Posterior cingulate gyrus (tissue), 11 donors: ENCODE measurements at regions of chr5 and their contacts with region 1.

Region 1: DNA sequence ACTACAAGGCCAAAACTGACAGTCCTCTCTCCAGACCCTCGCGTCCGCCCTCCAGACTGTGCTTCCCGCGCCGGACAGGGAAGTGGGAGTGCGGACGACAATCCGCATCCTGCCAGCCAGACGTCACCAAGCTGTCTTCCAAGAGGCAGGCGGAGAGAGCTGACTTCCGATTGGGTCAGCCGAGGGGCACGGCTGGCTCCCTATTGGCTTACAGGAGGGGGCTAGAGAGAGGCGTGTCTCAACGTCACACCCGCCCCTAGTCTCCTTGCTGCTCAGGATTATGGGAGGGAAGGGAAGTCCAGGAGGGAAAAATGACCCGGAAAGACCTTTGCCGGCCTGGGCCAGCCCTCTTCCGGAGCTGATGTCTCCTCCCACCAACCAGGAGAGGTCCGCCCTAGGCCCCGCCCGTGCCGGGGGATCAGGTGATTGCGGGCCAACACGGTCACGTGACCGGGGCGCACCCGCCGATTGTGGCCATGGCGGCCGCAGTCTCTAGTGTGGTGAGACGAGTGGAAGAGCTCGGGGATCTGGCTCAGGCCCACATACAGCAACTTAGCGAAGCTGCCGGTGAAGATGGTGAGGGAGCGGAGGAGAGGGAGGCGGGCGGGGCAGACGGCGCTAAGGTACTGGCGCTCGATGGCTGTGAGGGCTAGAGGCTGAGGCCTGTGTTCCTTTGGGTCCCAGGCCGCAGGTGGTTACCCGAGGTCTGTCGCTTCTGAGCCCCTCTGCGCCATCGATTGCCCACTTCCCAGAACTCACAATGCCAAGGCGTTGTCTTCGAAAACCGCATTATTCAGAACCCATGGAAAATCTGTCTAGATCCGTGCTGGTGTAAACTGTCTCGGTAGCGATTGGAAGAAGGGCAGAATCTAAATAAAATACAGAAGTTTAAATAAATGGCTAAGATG is at the start of gene RIMOC1:
- DNase-seq: peak; percentile 98 to 100 (median 99)

Region 2: GRCh38 chr5:41763081-41763480 is 141.1 kb before region 1 on chr5:
- intact Hi-C with region 1: no loop called
- DNase-seq: no peak

Region 3: DNA sequence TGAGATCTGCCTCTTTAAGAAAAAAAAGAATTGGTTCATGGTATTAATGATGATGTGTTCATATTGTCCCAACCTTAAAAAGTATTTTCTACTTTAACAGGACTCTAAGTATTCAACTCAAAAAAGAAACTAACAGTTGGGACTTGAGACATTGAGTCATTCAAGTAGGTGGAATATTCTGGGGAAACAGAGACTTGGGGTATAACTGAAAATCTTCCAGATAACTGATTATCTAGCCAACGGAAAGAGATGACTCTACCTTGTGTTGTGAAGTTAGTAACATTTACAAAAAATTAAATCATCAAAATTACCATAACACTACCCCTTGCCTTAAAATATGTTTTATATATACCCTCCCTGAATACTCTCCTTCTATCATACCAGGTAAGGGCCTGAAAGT is 53.0 kb before region 1 on chr5:
- intact Hi-C with region 1: no loop called
- DNase-seq: no peak

Region 4: GRCh38 chr5:41869739-41870626 is 34.2 kb before region 1 on chr5 and contains the start of gene OXCT1:
- intact Hi-C with region 1: loop called (anchors 2 kb)
- DNase-seq: peak; percentile 51 to 96 (median 69)

Region 5: GRCh38 chr5:41924872-41925554 is 20.9 kb after region 1 on chr5 and contains the start of gene FBXO4:
- intact Hi-C with region 1: loop called (anchors 1 kb)
- DNase-seq: peak; percentile 68 to 98 (median 83)

Region 6: GRCh38 chr5:41940641-41941040 is 36.5 kb after region 1 on chr5:
- intact Hi-C with region 1: no loop called
- DNase-seq: no peak